GM12878 (cell line): ENCODE measurements at regions of chr19 and their contacts with region 1.

Region 1: DNA sequence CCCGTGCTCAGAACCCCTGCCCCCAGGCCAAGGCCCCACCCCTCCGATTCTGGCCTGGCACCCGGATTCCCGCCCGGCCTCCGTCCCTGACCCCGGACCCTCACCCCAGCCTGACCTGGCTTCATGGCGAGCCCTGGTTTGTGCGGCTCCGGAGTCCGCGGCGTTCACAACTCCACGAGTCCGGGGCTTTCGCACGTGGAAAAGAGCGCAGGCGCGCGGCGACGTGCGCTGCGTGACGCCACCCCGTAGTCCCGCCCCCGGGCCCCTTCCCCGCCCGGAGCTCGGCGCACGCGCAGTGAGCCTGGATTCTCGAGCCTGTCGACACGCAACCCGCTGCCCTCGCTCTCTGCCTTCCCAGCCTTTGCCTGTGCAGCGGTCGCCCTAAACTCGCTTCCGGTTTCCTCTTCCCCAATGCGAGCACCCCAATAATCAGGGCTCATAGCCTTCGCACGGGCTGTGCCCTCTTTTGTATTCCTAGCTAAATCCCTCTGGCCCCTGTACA is at the start of gene FBL:
- DNase-seq: peak; percentile 82
- ATAC-seq: peak; percentile 94
- H3K4me3 ChIP-seq: peak within 1 kb of the TSS; percentile 70
- H3K27ac ChIP-seq: peak within 1 kb of the TSS; percentile 81
- H3K4me1 ChIP-seq: peaks cover 15% of the 10 kb centered on the region
- H3K27me3 ChIP-seq: no peaks in the 10 kb centered on the region
- CTCF ChIP-seq: no peak
- EP300 ChIP-seq: no peak
- POLR2A ChIP-seq: peak; percentile 93
- RAD21 ChIP-seq: no peak
- polyA plus RNA-seq, gene FBL: 156 to 460 TPM

Region 2: GRCh38 chr19:39557441-39558151 is 288.6 kb before region 1 on chr19:
- CTCF ChIA-PET with region 1: interaction called, 60 read pairs
- POLR2A ChIA-PET with region 1: no interaction called
- RAD21 ChIA-PET with region 1: interaction called, 18 read pairs
- SMC1A ChIA-PET with region 1: interaction called, 16 read pairs
- in situ Hi-C with region 1: no loop called
- intact Hi-C with region 1: no loop called
- DNase-seq: peak; percentile 41
- ATAC-seq: peak; percentile 91
- H3K4me3 ChIP-seq: peak overlapping the region; percentile 52
- H3K27ac ChIP-seq: peak overlapping the region; percentile 88
- H3K4me1 ChIP-seq: peaks cover 34% of the 10 kb centered on the region
- H3K27me3 ChIP-seq: no peaks in the 10 kb centered on the region
- CTCF ChIP-seq: no peak
- EP300 ChIP-seq: no peak
- POLR2A ChIP-seq: no peak
- RAD21 ChIP-seq: no peak

Region 3: GRCh38 chr19:39704181-39705044 is 141.8 kb before region 1 on chr19 and contains the start of gene LGALS14:
- CTCF ChIA-PET with region 1: interaction called, 22 read pairs
- POLR2A ChIA-PET with region 1: interaction called, 3 read pairs
- RAD21 ChIA-PET with region 1: interaction called, 5 read pairs
- SMC1A ChIA-PET with region 1: interaction called, 11 read pairs
- in situ Hi-C with region 1: no loop called
- intact Hi-C with region 1: no loop called
- DNase-seq: no peak
- ATAC-seq: peak; percentile 68
- H3K4me3 ChIP-seq: peak within 1 kb of the TSS; percentile 58
- H3K27ac ChIP-seq: peak within 1 kb of the TSS; percentile 88
- H3K4me1 ChIP-seq: peaks cover 91% of the 10 kb centered on the region
- H3K27me3 ChIP-seq: no peaks in the 10 kb centered on the region
- CTCF ChIP-seq: no peak
- EP300 ChIP-seq: 0 out of 4 replicates have a peak, but pooled peaks of 1 of the 2 experiments have one; percentile 33
- POLR2A ChIP-seq: peak; percentile 62
- RAD21 ChIP-seq: no peak
- polyA plus RNA-seq, gene LGALS14: 21.0 to 34.6 TPM

Region 4: DNA sequence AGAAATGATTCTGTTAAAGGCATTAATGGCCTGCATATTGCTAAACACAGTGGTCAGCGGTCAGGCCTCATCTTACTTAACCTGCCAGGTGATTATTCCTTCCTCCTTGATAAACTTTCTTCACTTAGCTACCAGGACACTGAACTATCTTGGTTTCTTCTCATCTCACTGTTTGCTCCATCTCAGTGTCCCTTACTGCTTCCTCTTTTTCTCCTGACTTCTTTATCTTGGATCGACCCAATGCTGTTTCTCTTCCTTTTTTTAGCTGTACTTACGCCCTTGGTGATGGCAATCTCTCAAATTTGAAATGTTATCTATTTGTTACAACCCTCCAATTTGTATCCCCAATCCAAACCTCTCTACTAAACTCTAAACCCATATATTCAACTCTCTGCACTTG is 100.6 kb before region 1 on chr19:
- CTCF ChIA-PET with region 1: no interaction called
- POLR2A ChIA-PET with region 1: no interaction called
- RAD21 ChIA-PET with region 1: no interaction called
- SMC1A ChIA-PET with region 1: no interaction called
- in situ Hi-C with region 1: no loop called
- intact Hi-C with region 1: no loop called
- DNase-seq: no peak
- ATAC-seq: no peak
- H3K4me3 ChIP-seq: no peak overlapping the region
- H3K27ac ChIP-seq: no peak overlapping the region
- H3K4me1 ChIP-seq: no peaks in the 10 kb centered on the region
- H3K27me3 ChIP-seq: no peaks in the 10 kb centered on the region
- CTCF ChIP-seq: no peak
- EP300 ChIP-seq: no peak
- POLR2A ChIP-seq: no peak
- RAD21 ChIP-seq: no peak

Region 5: GRCh38 chr19:39778763-39779162 is 67.5 kb before region 1 on chr19 and contains the start of gene LEUTX:
- CTCF ChIA-PET with region 1: interaction called, 15 read pairs
- POLR2A ChIA-PET with region 1: no interaction called
- RAD21 ChIA-PET with region 1: interaction called, 11 read pairs
- SMC1A ChIA-PET with region 1: interaction called, 8 read pairs
- in situ Hi-C with region 1: no loop called
- intact Hi-C with region 1: no loop called
- DNase-seq: peak; percentile 55
- ATAC-seq: peak; percentile 93
- H3K4me3 ChIP-seq: 0 out of 2 replicates have a peak within 1 kb of the TSS, but pooled peaks have one; percentile 0
- H3K27ac ChIP-seq: no peak within 1 kb of the TSS
- H3K4me1 ChIP-seq: peaks cover 17% of the 10 kb centered on the region
- H3K27me3 ChIP-seq: no peaks in the 10 kb centered on the region
- CTCF ChIP-seq: no peak
- EP300 ChIP-seq: no peak
- POLR2A ChIP-seq: no peak
- RAD21 ChIP-seq: no peak
- polyA plus RNA-seq, gene LEUTX: 0.29 to 0.40 TPM

Region 6: DNA sequence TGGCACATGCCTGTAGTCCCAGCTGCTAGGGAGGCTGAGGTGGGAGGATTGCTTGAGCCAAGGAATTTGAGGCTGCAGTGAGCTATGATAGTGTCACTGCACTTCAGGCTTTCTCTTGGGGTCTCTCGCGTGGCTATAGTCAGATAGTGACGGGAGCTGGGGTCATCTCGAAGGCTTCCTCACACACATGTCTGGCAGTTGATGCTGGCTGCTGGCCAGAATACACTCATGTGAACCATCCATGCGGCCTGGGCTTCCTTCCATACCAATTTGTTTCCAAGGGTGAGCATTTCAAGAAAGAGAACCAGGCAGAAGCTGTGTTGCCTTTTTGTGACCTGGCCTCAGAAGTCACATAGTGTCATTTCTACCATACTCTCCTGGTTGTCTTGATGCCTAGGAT is 41.1 kb before region 1 on chr19:
- CTCF ChIA-PET with region 1: interaction called, 52 read pairs
- POLR2A ChIA-PET with region 1: no interaction called
- RAD21 ChIA-PET with region 1: interaction called, 11 read pairs
- SMC1A ChIA-PET with region 1: interaction called, 22 read pairs
- in situ Hi-C with region 1: no loop called
- intact Hi-C with region 1: no loop called
- DNase-seq: no peak
- ATAC-seq: no peak
- H3K4me3 ChIP-seq: no peak overlapping the region
- H3K27ac ChIP-seq: no peak overlapping the region
- H3K4me1 ChIP-seq: no peaks in the 10 kb centered on the region
- H3K27me3 ChIP-seq: no peaks in the 10 kb centered on the region
- CTCF ChIP-seq: no peak
- EP300 ChIP-seq: no peak
- POLR2A ChIP-seq: no peak
- RAD21 ChIP-seq: no peak

Region 7: GRCh38 chr19:39818626-39819097 is 27.6 kb before region 1 on chr19:
- CTCF ChIA-PET with region 1: interaction called, 83 read pairs
- POLR2A ChIA-PET with region 1: interaction called, 7 read pairs
- RAD21 ChIA-PET with region 1: interaction called, 17 read pairs
- SMC1A ChIA-PET with region 1: interaction called, 16 read pairs
- in situ Hi-C with region 1: no loop called
- intact Hi-C with region 1: no loop called
- DNase-seq: peak; percentile 77
- ATAC-seq: peak; percentile 96
- H3K4me3 ChIP-seq: no peak overlapping the region
- H3K27ac ChIP-seq: peak overlapping the region; percentile 47
- H3K4me1 ChIP-seq: peaks cover 36% of the 10 kb centered on the region
- H3K27me3 ChIP-seq: no peaks in the 10 kb centered on the region
- CTCF ChIP-seq: no peak
- EP300 ChIP-seq: peak; percentile 30 to 60; a peak in 2 of 4 replicates
- POLR2A ChIP-seq: peak; percentile 38; the same call in 1 of the 2 replicates
- RAD21 ChIP-seq: no peak

Region 8: DNA sequence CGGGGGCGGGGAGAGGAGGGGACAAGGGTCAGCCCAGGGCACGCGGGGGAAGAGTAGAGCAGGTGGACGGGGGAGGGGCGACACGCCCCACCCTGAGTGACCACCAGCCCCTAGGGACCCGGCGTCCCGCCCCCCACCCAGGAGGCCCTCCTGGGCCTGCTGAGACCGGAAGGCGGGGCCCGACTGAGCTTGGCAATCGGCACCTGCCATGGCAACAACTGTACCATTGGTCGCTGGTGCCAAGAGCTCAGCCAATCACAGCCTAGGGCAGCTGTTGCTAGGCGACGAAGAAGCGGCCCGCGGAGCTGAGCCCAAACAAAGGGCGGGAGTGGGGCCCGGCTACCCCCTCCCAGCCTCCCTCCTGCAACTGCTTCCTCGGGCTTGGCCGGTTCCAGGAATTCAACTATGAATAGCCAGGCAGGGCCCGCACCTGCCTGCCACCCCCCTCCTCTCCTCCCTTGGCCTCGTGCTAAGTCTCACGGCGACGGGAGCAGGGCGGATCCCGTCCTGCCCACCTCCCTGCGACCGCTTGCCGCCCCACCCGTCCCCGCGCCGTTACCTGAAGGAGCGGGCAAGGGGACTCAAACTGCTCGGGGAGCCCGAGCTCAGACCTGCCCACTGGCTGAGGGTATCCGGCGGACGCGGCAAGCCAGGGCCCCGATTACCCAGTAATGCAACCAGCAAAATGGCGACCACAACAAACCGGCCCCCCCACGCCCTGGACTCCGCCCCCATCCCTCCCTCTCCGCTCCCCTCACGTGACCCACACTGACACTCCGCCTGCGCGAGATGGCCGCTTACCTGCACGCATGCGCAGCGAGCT is 12.6 kb before region 1 on chr19 and contains the start of gene DYRK1B:
- CTCF ChIA-PET with region 1: interaction called, 61 read pairs
- POLR2A ChIA-PET with region 1: interaction called, 34 read pairs
- RAD21 ChIA-PET with region 1: interaction called, 26 read pairs
- SMC1A ChIA-PET with region 1: interaction called, 33 read pairs
- in situ Hi-C with region 1: no loop called
- intact Hi-C with region 1: no loop called
- DNase-seq: peak; percentile 92
- ATAC-seq: peak; percentile 98
- H3K4me3 ChIP-seq: peak within 1 kb of the TSS; percentile 97
- H3K27ac ChIP-seq: peak within 1 kb of the TSS; percentile 51
- H3K4me1 ChIP-seq: peaks cover 15% of the 10 kb centered on the region
- H3K27me3 ChIP-seq: no peaks in the 10 kb centered on the region
- CTCF ChIP-seq: no peak
- EP300 ChIP-seq: peak in 1 of 2 experiments; percentile 70; a peak in 2 of 4 replicates
- POLR2A ChIP-seq: peak; percentile 69
- RAD21 ChIP-seq: no peak
- polyA plus RNA-seq, gene DYRK1B: 0.07 TPM in 1 of 2 experiments, not detected in the other

Region 9: GRCh38 chr19:39906820-39907611 is 60.8 kb after region 1 on chr19:
- CTCF ChIA-PET with region 1: no interaction called
- POLR2A ChIA-PET with region 1: no interaction called
- RAD21 ChIA-PET with region 1: no interaction called
- SMC1A ChIA-PET with region 1: no interaction called
- in situ Hi-C with region 1: no loop called
- intact Hi-C with region 1: no loop called
- DNase-seq: no peak
- ATAC-seq: no peak
- H3K4me3 ChIP-seq: no peak overlapping the region
- H3K27ac ChIP-seq: no peak overlapping the region
- H3K4me1 ChIP-seq: no peaks in the 10 kb centered on the region
- H3K27me3 ChIP-seq: no peaks in the 10 kb centered on the region
- CTCF ChIP-seq: no peak
- EP300 ChIP-seq: no peak
- POLR2A ChIP-seq: no peak
- RAD21 ChIP-seq: no peak

Region 10: GRCh38 chr19:39982883-39983282 is 136.7 kb after region 1 on chr19:
- CTCF ChIA-PET with region 1: no interaction called
- POLR2A ChIA-PET with region 1: no interaction called
- RAD21 ChIA-PET with region 1: no interaction called
- SMC1A ChIA-PET with region 1: no interaction called
- in situ Hi-C with region 1: no loop called
- intact Hi-C with region 1: no loop called
- DNase-seq: no peak
- ATAC-seq: no peak
- H3K4me3 ChIP-seq: no peak overlapping the region
- H3K27ac ChIP-seq: no peak overlapping the region
- H3K4me1 ChIP-seq: no peaks in the 10 kb centered on the region
- H3K27me3 ChIP-seq: no peaks in the 10 kb centered on the region
- CTCF ChIP-seq: no peak
- EP300 ChIP-seq: no peak
- POLR2A ChIP-seq: no peak
- RAD21 ChIP-seq: no peak